PC-9 (cell line): ENCODE measurements at regions of chr6 and their contacts with region 1.

Region 1: GRCh38 chr6:153210083-153210482 is 79.0 kb upstream of the RGS17 start:
- DNase-seq: no peak
- H3K4me3 ChIP-seq: no peak overlapping the region
- H3K27ac ChIP-seq: no peak overlapping the region
- H3K4me1 ChIP-seq: no peaks in the 10 kb centered on the region
- H3K27me3 ChIP-seq: no peaks in the 10 kb centered on the region
- CTCF ChIP-seq: no peak

Region 2: GRCh38 chr6:152783217-152783878 is 426.7 kb before region 1 on chr6:
- CTCF ChIA-PET with region 1: no interaction called
- POLR2A ChIA-PET with region 1: interaction called, 26 read pairs
- intact Hi-C with region 1: no loop called
- DNase-seq: no peak
- H3K4me3 ChIP-seq: no peak overlapping the region
- H3K27ac ChIP-seq: no peak overlapping the region
- H3K4me1 ChIP-seq: no peaks in the 10 kb centered on the region
- H3K27me3 ChIP-seq: no peaks in the 10 kb centered on the region
- CTCF ChIP-seq: no peak

Region 3: DNA sequence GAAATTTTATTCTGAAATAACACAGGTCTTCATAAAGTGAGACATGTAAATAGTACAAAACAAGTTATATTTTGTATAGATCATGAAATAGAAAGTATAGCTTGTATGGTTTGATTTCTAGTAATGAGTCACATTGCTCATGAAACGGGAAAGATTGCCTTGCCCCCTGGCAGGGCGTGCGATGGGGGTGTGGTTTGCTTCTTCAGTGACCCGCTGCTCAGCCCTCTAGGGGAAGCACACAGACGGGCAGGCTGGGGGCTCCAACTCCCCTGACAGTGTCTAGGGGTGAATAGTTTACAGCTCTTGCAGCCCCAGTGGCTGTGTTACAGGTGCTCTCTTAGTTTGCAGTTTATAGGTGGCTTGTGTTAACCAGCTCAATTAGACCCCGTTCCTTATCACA is 91.5 kb after region 1 on chr6:
- CTCF ChIA-PET with region 1: no interaction called
- POLR2A ChIA-PET with region 1: no interaction called
- intact Hi-C with region 1: no loop called
- DNase-seq: no peak
- H3K4me3 ChIP-seq: no peak overlapping the region
- H3K27ac ChIP-seq: no peak overlapping the region
- H3K4me1 ChIP-seq: no peaks in the 10 kb centered on the region
- H3K27me3 ChIP-seq: no peaks in the 10 kb centered on the region
- CTCF ChIP-seq: no peak

Region 4: GRCh38 chr6:153373869-153374268 is 163.8 kb after region 1 on chr6:
- CTCF ChIA-PET with region 1: no interaction called
- POLR2A ChIA-PET with region 1: no interaction called
- intact Hi-C with region 1: no loop called
- DNase-seq: no peak
- H3K4me3 ChIP-seq: no peak overlapping the region
- H3K27ac ChIP-seq: no peak overlapping the region
- H3K4me1 ChIP-seq: no peaks in the 10 kb centered on the region
- H3K27me3 ChIP-seq: no peaks in the 10 kb centered on the region
- CTCF ChIP-seq: no peak